Activated CD8-positive, alpha-beta T cell treated with anti-CD3 and anti-CD28 coated beads for 36 hours (primary cell): ENCODE measurements at regions of chr4 and their contacts with region 1.

Region 1: GRCh38 chr4:168923526-168924194 is 86.4 kb downstream of the CBR4 start:
- DNase-seq: peak; percentile 65
- ATAC-seq: no peak
- H3K4me3 Mint-ChIP-seq: no peak overlapping the region
- H3K27ac Mint-ChIP-seq: no peak overlapping the region
- H3K4me1 Mint-ChIP-seq: no peaks in the 10 kb centered on the region
- H3K27me3 Mint-ChIP-seq: no peaks in the 10 kb centered on the region
- CTCF ChIP-seq: peak; percentile 78

Region 2: DNA sequence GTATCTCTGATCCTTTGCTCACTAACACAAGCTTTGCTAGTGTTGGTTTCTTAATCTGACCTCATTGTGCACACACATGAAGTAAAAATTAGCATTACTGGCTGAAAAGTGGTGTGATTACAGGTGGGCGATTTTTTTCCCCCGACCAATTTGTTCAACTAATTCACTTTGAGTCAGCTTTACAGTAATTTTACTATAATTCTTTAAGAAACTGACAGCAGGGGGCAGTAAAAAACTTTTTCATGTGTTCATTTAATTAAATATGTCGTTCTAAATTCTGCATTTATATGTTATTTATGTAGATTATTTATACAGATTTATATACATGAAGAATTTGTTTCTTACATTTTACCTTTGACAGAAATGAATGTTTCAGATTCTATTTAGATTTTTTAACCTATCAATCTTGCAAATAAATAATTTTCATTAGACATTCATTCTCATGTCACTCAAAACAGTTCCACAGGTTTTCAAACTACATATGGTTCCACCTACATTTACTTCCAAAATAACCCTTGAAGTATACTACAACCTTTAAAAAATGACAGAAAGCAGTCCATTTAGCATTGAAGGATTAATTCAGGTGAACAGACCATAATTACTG is 409.3 kb before region 1 on chr4:
- CTCF ChIA-PET with region 1: interaction called, 5 read pairs
- POLR2A ChIA-PET with region 1: no interaction called
- intact Hi-C with region 1: loop called (anchors 5 kb)
- DNase-seq: peak; percentile 13
- ATAC-seq: no peak
- H3K4me3 Mint-ChIP-seq: no peak overlapping the region
- H3K27ac Mint-ChIP-seq: no peak overlapping the region
- H3K4me1 Mint-ChIP-seq: peaks cover 32% of the 10 kb centered on the region
- H3K27me3 Mint-ChIP-seq: no peaks in the 10 kb centered on the region
- CTCF ChIP-seq: peak; percentile 54

Region 3: DNA sequence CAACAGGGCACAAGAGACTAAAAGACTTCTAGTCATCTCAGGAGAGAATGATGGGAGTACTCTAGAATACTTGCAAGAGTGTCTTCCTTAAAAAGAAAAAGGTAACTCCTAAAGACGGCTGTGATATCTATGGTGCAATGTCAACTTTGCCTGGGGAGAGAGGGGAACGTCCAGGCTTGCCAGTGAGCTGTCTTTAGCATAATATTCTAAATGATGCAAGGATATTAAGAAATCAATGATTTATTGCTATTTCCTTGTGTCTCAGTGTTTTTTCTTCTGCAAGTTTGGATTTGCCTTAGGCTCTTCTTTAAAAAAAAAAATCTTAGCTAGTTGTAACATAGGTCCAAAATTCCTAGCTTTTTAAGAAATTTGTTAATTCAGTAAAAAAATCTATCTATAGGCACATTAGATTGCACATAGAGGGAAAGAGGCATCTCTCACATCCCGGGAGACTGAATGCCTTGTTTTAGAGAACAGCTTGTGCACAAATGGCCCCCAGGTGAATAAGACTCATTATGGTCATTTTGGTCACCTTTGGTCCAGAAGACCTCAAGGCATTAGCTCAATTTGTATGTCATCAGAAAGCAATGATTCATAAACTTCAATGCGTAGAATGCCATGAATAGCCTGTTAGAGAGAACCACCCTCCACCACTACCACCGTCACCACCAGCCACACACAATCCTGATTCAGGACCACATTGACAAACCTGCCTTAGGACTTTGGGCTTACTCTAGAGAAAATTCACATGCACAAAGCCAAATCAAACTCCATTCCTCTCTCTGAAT is 322.7 kb before region 1 on chr4:
- CTCF ChIA-PET with region 1: no interaction called
- POLR2A ChIA-PET with region 1: no interaction called
- intact Hi-C with region 1: no loop called
- DNase-seq: no peak
- ATAC-seq: no peak
- H3K4me3 Mint-ChIP-seq: no peak overlapping the region
- H3K27ac Mint-ChIP-seq: no peak overlapping the region
- H3K4me1 Mint-ChIP-seq: no peaks in the 10 kb centered on the region
- H3K27me3 Mint-ChIP-seq: peaks cover 7% of the 10 kb centered on the region
- CTCF ChIP-seq: no peak

Region 4: GRCh38 chr4:168811227-168811626 is 112.4 kb before region 1 on chr4:
- CTCF ChIA-PET with region 1: no interaction called
- POLR2A ChIA-PET with region 1: no interaction called
- intact Hi-C with region 1: no loop called
- DNase-seq: no peak
- ATAC-seq: no peak
- H3K4me3 Mint-ChIP-seq: no peak overlapping the region
- H3K27ac Mint-ChIP-seq: no peak overlapping the region
- H3K4me1 Mint-ChIP-seq: no peaks in the 10 kb centered on the region
- H3K27me3 Mint-ChIP-seq: peaks cover 3% of the 10 kb centered on the region
- CTCF ChIP-seq: no peak

Region 5: GRCh38 chr4:168908093-168908492 is 15.6 kb before region 1 on chr4:
- CTCF ChIA-PET with region 1: interaction called, 20 read pairs
- POLR2A ChIA-PET with region 1: no interaction called
- intact Hi-C with region 1: no loop called
- DNase-seq: no peak
- ATAC-seq: no peak
- H3K4me3 Mint-ChIP-seq: no peak overlapping the region
- H3K27ac Mint-ChIP-seq: no peak overlapping the region
- H3K4me1 Mint-ChIP-seq: no peaks in the 10 kb centered on the region
- H3K27me3 Mint-ChIP-seq: no peaks in the 10 kb centered on the region
- CTCF ChIP-seq: no peak

Region 6: DNA sequence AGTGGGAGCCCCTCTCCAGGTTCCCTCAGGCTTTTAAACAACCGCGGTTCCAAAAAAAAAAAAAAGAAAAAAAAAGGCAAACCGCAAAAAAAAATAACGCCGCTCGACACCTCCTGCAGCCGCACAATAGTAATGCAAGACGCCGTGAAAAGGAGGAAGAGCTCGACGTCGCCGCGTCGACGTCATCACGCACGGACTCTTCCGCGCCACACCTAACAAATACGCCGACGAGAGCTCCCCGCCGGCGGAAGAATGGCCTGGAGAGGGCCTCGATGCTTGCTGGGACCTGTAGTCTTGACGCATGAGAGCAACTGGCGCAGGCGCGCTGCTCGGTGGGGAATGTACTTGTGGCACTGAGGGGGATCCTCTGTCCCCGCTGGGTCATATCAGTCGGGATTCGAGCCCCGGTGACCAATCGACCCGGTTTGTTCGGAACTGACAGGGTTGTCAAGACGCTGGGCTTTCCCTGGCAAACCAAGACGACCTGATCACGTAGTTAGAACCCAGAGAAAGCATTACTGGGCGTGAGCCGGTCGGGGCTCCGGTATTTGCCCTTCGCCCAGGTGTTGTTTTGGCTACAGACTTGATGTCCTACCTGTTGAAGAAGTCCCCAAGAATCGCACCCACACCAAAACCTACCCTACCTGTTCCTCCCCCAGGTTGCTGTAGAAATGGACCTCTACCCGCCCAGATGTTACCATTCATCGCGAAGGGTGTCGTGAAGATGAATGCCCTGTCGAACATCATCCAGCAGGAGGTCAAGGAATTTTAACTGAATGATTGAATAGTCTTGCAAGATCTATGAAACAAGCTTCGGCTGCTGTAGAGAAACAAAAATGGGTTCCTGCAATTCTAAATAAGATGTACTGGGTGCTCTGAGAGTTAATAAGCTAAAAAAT is 86.7 kb after region 1 on chr4 and contains the start of gene CBR4:
- CTCF ChIA-PET with region 1: interaction called, 7 read pairs
- POLR2A ChIA-PET with region 1: no interaction called
- intact Hi-C with region 1: loop called (anchors 5 kb)
- DNase-seq: peak; percentile 98
- ATAC-seq: peak; percentile 98
- H3K4me3 Mint-ChIP-seq: peak within 1 kb of the TSS; percentile 85
- H3K27ac Mint-ChIP-seq: peak within 1 kb of the TSS; percentile 87
- H3K4me1 Mint-ChIP-seq: peaks cover 32% of the 10 kb centered on the region
- H3K27me3 Mint-ChIP-seq: no peaks in the 10 kb centered on the region
- CTCF ChIP-seq: peak; percentile 8
- total RNA-seq, gene CBR4: 25.8 to 26.8 TPM

Region 7: DNA sequence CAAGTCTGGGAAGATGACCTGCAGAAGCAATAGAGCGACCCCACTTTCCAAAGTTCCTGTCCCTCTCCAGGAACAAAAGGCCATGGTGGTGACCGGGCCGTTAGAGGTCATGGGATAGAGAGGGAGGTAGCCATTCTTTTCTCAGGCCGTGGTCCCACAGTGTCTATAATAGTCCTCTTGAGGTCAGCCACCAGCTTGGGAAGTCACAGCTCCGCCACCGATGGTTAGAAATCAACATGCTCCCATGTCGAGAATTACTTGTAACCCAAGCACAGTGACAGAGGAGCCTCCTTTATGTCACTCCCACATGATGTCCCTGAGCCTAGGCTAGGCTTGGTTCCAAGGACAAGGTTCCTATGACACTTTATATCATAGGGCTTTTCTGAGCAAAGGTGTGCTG is 134.7 kb after region 1 on chr4:
- CTCF ChIA-PET with region 1: no interaction called
- POLR2A ChIA-PET with region 1: no interaction called
- intact Hi-C with region 1: no loop called
- DNase-seq: no peak
- ATAC-seq: no peak
- H3K4me3 Mint-ChIP-seq: no peak overlapping the region
- H3K27ac Mint-ChIP-seq: no peak overlapping the region
- H3K4me1 Mint-ChIP-seq: no peaks in the 10 kb centered on the region
- H3K27me3 Mint-ChIP-seq: peaks cover 3% of the 10 kb centered on the region
- CTCF ChIP-seq: no peak

Region 8: DNA sequence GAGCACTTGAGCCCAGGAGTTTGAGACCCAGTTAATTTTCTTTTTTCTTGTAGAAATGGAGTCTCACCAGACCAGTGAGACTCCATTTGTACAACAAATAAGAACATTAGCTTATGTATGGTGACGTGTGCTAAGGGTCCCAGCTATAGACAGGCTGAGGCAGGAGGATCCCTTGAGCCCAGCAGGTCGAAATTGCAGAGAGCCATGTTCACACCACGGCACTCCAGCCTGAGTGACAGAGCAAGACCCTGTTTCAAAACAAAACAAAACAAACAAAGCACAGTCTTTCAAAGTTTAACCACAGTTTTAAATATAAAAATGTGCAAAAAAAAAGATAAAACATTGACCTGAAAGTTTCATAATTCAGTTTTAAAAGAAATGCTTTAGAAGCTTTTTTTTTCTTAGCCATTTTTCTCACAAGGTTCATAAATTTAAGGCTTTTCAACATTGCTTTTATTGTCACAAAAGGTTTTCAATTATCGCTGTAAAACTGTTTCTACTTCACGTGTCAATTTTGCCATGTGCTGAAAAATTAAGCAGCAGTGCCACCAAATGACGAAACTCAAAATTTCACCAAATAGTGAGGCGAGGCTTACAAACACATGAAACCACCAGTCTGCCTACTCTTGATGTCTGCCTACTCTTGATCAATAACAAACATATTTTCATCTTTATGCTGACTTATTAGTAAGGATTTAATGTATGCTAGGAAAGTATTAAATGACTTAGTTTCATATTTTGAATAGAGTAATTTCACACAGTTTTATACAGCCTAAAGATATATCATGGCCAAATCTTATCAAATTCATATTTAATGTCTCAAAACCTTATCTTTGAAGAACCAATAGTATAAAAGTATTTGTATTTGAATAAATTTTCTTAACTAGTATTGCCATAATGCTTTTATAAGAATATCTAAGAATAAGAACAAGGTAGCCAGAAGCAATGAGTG is 562.4 kb after region 1 on chr4:
- CTCF ChIA-PET with region 1: interaction called, 25 read pairs
- POLR2A ChIA-PET with region 1: no interaction called
- intact Hi-C with region 1: loop called (anchors 5 kb)
- DNase-seq: peak; percentile 42
- ATAC-seq: peak; percentile 51
- H3K4me3 Mint-ChIP-seq: no peak overlapping the region
- H3K27ac Mint-ChIP-seq: no peak overlapping the region
- H3K4me1 Mint-ChIP-seq: no peaks in the 10 kb centered on the region
- H3K27me3 Mint-ChIP-seq: no peaks in the 10 kb centered on the region
- CTCF ChIP-seq: peak; percentile 77

Region 9: GRCh38 chr4:169492438-169493163 is 568.9 kb after region 1 on chr4:
- CTCF ChIA-PET with region 1: interaction called, 17 read pairs
- POLR2A ChIA-PET with region 1: no interaction called
- intact Hi-C with region 1: loop called (anchors 5 kb)
- DNase-seq: peak; percentile 43
- ATAC-seq: peak; percentile 74
- H3K4me3 Mint-ChIP-seq: no peak overlapping the region
- H3K27ac Mint-ChIP-seq: no peak overlapping the region
- H3K4me1 Mint-ChIP-seq: peaks cover 3% of the 10 kb centered on the region
- H3K27me3 Mint-ChIP-seq: no peaks in the 10 kb centered on the region
- CTCF ChIP-seq: peak; percentile 68

Region 10: GRCh38 chr4:169566021-169566818 is 642.6 kb after region 1 on chr4:
- CTCF ChIA-PET with region 1: interaction called, 18 read pairs
- POLR2A ChIA-PET with region 1: no interaction called
- intact Hi-C with region 1: loop called (anchors 5 kb)
- DNase-seq: peak; percentile 59
- ATAC-seq: peak; percentile 56
- H3K4me3 Mint-ChIP-seq: no peak overlapping the region
- H3K27ac Mint-ChIP-seq: peak overlapping the region; percentile 72
- H3K4me1 Mint-ChIP-seq: peaks cover 5% of the 10 kb centered on the region
- H3K27me3 Mint-ChIP-seq: no peaks in the 10 kb centered on the region
- CTCF ChIP-seq: peak; percentile 64

Region 11: GRCh38 chr4:169593050-169593560 is 669.4 kb after region 1 on chr4:
- CTCF ChIA-PET with region 1: no interaction called
- POLR2A ChIA-PET with region 1: no interaction called
- intact Hi-C with region 1: no loop called
- DNase-seq: no peak
- ATAC-seq: no peak
- H3K4me3 Mint-ChIP-seq: no peak overlapping the region
- H3K27ac Mint-ChIP-seq: no peak overlapping the region
- H3K4me1 Mint-ChIP-seq: no peaks in the 10 kb centered on the region
- H3K27me3 Mint-ChIP-seq: no peaks in the 10 kb centered on the region
- CTCF ChIP-seq: no peak